Mammary epithelial cell (primary cell): ENCODE measurements at regions of chr1 and their contacts with region 1.

Region 1: GRCh38 chr1:30418081-30418938 is 305.1 kb downstream of the MATN1 start:
- DNase-seq: no peak
- H3K4me3 ChIP-seq: no peak overlapping the region
- H3K27ac ChIP-seq: no peak overlapping the region
- H3K4me1 ChIP-seq: peaks cover 9% of the 10 kb centered on the region
- H3K27me3 ChIP-seq: no peaks in the 10 kb centered on the region
- CTCF ChIP-seq: no peak

Region 2: DNA sequence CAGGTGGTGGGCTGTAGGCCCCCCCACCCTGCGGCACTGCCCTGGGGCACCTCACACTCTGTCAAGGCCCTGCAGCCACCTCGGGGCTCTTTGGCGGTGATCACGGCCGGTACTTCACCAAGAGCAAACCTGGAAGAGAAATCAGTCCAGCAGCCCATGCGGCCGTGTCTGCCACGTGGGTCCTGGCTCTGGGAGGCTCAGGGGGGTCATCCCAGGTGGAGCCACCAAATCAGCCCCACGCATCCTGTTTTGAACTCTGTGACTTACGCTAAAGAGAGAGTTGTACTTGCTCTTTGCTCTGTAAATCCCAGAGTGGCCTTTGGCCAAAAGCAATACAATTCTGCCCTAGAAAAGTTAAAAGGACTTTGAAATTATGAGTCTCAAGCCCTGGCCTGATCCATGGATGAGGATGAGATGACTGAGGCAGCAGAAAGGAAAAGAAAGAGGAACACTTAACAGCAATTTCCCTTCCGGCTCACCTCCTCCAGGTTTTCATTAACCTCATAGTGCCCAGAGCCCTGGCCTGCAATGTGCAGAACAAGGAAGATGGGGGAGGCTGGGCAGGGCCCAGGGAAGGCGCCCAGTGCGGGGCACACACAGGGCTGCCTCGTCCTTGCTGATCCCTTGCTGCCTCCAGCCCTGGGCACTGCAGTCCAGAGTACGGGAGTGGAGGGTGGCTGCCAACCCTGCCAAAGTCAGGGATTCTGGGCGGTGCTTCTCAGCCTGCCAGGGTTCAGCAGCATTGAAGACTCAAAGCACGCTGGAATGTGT is 32.0 kb before region 1 on chr1:
- CTCF ChIA-PET with region 1: no interaction called
- dilution Hi-C with region 1: no loop called
- in situ Hi-C with region 1: no loop called
- intact Hi-C with region 1: loop called (anchors 1 kb)
- DNase-seq: no peak
- H3K4me3 ChIP-seq: no peak overlapping the region
- H3K27ac ChIP-seq: no peak overlapping the region
- H3K4me1 ChIP-seq: no peaks in the 10 kb centered on the region
- H3K27me3 ChIP-seq: no peaks in the 10 kb centered on the region
- CTCF ChIP-seq: no peak

Region 3: DNA sequence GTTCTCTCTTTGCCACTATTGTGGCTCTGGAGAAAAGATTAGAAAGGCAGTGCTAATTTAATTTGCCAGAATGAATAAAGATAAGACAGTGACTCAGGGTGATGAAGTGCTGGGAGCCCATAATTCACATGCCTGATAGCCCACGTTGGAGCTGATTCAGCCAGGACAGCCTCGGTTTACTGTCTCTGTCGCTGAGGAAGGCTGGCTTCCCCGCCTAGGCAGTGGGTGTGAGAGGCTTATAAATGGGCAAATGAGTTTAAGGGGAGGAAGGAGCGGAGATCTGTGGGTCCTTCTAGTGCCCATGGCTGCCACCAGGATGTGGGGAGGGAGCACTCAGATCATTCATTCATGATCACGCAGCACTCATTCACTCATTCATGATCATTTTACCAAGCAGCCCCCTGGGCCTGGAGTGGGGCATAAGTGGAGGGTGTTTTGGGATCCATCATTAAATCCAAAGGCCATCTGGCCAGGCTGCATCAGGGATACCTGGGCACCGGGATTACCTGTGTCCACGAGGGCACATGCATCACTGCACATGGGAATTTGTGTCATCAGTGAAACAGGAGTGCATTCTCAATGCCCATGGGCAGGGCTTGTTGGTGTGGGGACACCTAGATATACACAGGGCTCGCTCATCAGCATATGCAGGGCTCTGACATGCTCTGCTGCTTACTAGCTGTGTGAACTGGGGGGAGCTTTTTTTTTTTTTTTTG is 10.3 kb before region 1 on chr1:
- CTCF ChIA-PET with region 1: no interaction called
- dilution Hi-C with region 1: no loop called
- in situ Hi-C with region 1: no loop called
- intact Hi-C with region 1: no loop called
- DNase-seq: no peak
- H3K4me3 ChIP-seq: no peak overlapping the region
- H3K27ac ChIP-seq: no peak overlapping the region
- H3K4me1 ChIP-seq: peaks cover 6% of the 10 kb centered on the region
- H3K27me3 ChIP-seq: no peaks in the 10 kb centered on the region
- CTCF ChIP-seq: no peak

Region 4: GRCh38 chr1:30473922-30474817 is 55.9 kb after region 1 on chr1:
- CTCF ChIA-PET with region 1: no interaction called
- dilution Hi-C with region 1: loop called (anchors 5 kb)
- in situ Hi-C with region 1: no loop called
- intact Hi-C with region 1: no loop called
- DNase-seq: no peak
- H3K4me3 ChIP-seq: no peak overlapping the region
- H3K27ac ChIP-seq: no peak overlapping the region
- H3K4me1 ChIP-seq: no peaks in the 10 kb centered on the region
- H3K27me3 ChIP-seq: no peaks in the 10 kb centered on the region
- CTCF ChIP-seq: no peak

Region 5: DNA sequence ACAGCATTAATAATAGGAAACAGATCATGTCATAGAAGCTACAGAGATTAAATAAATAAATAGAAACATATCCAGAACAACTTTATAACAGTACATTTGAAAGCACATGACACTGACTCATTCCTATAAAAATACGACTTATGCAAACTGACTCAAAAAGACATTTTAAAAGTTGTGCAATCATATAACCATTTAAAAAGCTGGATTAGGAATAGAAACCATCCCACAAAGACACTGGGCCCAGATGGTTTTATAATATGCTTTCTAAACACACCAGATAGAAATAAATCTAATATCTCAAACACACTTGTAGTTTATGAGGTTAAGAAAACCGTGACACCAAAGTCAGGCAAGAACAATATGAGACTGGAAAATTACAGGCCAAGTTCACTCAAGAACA is 257.5 kb after region 1 on chr1:
- CTCF ChIA-PET with region 1: no interaction called
- dilution Hi-C with region 1: no loop called
- in situ Hi-C with region 1: no loop called
- intact Hi-C with region 1: no loop called
- DNase-seq: peak; percentile 71
- H3K4me3 ChIP-seq: no peak overlapping the region
- H3K27ac ChIP-seq: peak overlapping the region; percentile 30
- H3K4me1 ChIP-seq: peaks cover 17% of the 10 kb centered on the region
- H3K27me3 ChIP-seq: no peaks in the 10 kb centered on the region
- CTCF ChIP-seq: no peak